Psoas muscle (tissue), 8 donors: ENCODE measurements at regions of chrX and their contacts with region 1.

Region 1: GRCh38 chrX:54044126-54044876 is at the start of gene PHF8:
- DNase-seq: peak; percentile 94 to 97
- ATAC-seq: peak; percentile 94 to 95 (median 94)
- H3K4me3 ChIP-seq: peak within 1 kb of the TSS; percentile 81
- H3K27ac ChIP-seq: peak within 1 kb of the TSS; percentile 94
- H3K4me1 ChIP-seq: no peaks in the 10 kb centered on the region
- H3K27me3 ChIP-seq: no peaks in the 10 kb centered on the region
- CTCF ChIP-seq: no peak
- total RNA-seq, gene PHF8: 9.0 to 16.4 (median 11.9) TPM

Region 2: GRCh38 chrX:53683556-53684414 is 360.5 kb before region 1 on chrX:
- intact Hi-C with region 1: loop called in 1 of 2 experiments (anchors 10 kb)
- DNase-seq: peak; percentile 90 to 95
- ATAC-seq: peak; percentile 85 to 87 (median 86)
- H3K4me3 ChIP-seq: peak overlapping the region; percentile 78
- H3K27ac ChIP-seq: peak overlapping the region; percentile 92
- H3K4me1 ChIP-seq: peaks cover 8% of the 10 kb centered on the region
- H3K27me3 ChIP-seq: no peaks in the 10 kb centered on the region
- CTCF ChIP-seq: no peak

Region 3: GRCh38 chrX:54182864-54183608 is 138.7 kb after region 1 on chrX and contains the start of gene FAM120C:
- intact Hi-C with region 1: loop called in 1 of 2 experiments (anchors 5 kb)
- DNase-seq: peak; percentile 70 to 81
- ATAC-seq: peak; percentile 86 to 92 (median 90)
- H3K4me3 ChIP-seq: peak within 1 kb of the TSS; percentile 82
- H3K27ac ChIP-seq: peak within 1 kb of the TSS; percentile 89
- H3K4me1 ChIP-seq: peaks cover 8% of the 10 kb centered on the region
- H3K27me3 ChIP-seq: peaks cover 0 to 7% (median 0%) of the 10 kb centered on the region in 3 donors
- CTCF ChIP-seq: no peak
- total RNA-seq, gene FAM120C: 6.6 to 13.0 (median 7.8) TPM

Region 4: DNA sequence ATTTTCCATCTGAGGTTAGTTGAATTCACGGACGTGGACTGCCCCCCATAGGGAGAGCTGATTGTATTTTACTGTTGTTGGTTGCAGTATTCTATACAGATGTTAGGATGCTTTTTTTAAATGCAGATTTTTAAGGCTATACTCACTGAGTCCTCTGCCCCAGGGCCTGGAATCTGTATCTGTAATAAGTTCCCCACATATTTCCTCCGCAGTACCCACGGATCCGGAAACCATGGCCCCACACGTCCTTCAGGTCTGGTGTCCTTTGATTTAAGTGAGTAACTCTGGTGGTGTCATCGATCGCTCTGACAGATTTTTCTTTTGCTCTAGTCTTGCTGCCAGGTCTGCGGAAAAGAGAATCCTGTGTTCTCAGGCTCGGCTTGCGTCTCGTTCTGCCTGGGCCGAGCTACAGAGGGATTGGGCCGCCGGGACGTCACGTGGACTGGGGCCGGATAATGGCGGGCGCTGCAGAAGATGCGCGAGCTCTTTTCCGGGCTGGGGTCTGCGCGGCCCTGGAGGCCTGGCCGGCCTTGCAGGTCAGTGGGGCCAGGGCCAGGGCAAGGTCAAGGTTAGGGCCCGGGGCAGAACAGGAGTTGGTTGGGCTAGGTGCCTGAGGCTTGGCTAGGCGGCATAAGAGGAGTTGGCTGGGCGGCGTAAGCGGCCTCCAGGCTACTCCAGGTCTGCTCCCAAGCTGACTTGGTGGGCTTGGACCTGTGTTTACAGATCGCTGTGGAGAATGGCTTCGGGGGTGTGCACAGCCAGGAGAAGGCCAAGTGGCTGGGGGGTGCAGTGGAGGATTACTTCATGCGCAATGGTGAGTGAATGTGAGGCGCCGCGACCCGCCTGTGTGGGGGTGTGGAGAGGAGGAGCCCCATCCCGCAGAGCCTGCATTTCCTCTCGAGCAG is 395.9 kb after region 1 on chrX and contains the start of gene TSR2:
- intact Hi-C with region 1: loop called in 1 of 2 experiments (anchors 10 kb)
- DNase-seq: peak; percentile 83 to 86
- ATAC-seq: peak; percentile 98 to 100 (median 99)
- H3K4me3 ChIP-seq: peak within 1 kb of the TSS; percentile 82
- H3K27ac ChIP-seq: peak within 1 kb of the TSS; percentile 56
- H3K4me1 ChIP-seq: peaks cover 6% of the 10 kb centered on the region
- H3K27me3 ChIP-seq: peaks cover 0 to 1% (median 0%) of the 10 kb centered on the region in 3 donors
- CTCF ChIP-seq: no peak
- total RNA-seq, gene TSR2: 21.9 to 32.7 (median 30.3) TPM

Region 5: DNA sequence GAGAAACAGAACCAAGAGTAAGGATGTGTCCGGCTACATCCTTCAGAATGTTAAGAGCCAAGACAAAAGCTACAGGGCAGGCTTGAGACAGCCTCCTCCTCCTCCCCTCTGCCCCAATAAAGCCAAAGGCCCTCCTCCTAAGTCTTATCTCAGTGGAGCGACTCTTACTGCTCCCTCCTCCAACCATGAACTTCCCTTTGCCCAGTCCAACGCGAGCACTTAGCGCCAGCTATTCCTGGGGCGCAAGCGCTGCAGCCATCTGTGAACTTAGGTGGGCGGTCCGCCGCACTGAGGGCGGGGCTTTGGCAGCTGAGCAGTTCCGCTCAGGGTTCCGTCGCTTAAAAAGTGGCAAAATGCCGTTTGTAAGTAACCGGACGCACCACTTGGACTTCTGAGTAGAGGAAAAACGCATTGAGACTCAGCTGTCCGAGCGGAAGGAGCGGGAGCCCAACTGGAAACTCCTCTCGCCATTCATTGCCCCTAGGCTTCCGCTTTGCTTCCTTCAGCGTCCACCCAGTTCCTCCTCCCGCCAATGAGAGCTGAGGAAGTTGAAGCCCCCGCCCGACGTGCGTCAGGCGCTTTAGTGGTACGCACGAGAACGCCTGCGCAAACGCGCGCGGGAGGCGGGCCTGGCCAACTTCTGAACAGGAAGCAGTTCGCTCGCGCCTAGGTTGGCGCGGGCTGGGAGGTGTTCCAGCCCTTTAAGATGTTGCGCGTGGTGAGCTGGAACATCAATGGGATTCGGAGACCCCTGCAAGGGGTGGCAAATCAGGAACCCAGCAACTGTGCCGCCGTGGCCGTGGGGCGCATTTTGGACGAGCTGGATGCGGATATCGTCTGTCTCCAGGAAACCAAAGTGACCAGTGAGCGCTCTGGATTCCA is 955.7 kb after region 1 on chrX and contains the start of gene APEX2:
- intact Hi-C with region 1: loop called in 1 of 2 experiments (anchors 5 kb)
- DNase-seq: peak; percentile 92 to 95
- ATAC-seq: peak; percentile 87 to 93 (median 92)
- H3K4me3 ChIP-seq: peak within 1 kb of the TSS; percentile 80
- H3K27ac ChIP-seq: peak within 1 kb of the TSS; percentile 90
- H3K4me1 ChIP-seq: no peaks in the 10 kb centered on the region
- H3K27me3 ChIP-seq: no peaks in the 10 kb centered on the region
- CTCF ChIP-seq: no peak
- total RNA-seq, gene APEX2: 6.9 to 14.9 (median 10.0) TPM